ENCODE measurements at regions of chr2 and their contacts with region 1.

Region 1: DNA sequence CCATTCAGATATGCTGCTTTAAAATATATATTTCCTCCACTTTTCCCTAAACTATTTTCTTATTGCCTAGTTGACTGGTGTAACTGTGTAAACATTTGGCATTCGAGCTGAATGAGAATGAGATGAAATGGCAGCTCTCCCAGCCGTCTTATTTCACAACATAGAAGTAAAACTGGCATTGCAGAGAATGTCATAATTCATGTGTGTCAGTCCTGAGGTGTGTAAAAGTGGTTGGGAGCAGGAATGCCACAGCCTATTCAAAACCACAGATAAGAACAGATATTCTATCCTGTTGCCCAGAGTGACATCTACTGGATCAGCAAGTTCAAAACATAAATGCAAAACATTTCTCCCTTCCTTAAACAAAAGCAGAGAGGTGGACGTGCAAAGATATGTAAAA is 565.5 kb upstream of the CHAC2 start:
- DNase-seq: peak; percentile 56
- H3K4me3 Mint-ChIP-seq: no peak overlapping the region
- H3K27ac Mint-ChIP-seq: peak overlapping the region; percentile 54
- H3K4me1 Mint-ChIP-seq: peaks cover 9% of the 10 kb centered on the region
- H3K27me3 Mint-ChIP-seq: no peaks in the 10 kb centered on the region
- CTCF ChIP-seq: no peak

Region 2: DNA sequence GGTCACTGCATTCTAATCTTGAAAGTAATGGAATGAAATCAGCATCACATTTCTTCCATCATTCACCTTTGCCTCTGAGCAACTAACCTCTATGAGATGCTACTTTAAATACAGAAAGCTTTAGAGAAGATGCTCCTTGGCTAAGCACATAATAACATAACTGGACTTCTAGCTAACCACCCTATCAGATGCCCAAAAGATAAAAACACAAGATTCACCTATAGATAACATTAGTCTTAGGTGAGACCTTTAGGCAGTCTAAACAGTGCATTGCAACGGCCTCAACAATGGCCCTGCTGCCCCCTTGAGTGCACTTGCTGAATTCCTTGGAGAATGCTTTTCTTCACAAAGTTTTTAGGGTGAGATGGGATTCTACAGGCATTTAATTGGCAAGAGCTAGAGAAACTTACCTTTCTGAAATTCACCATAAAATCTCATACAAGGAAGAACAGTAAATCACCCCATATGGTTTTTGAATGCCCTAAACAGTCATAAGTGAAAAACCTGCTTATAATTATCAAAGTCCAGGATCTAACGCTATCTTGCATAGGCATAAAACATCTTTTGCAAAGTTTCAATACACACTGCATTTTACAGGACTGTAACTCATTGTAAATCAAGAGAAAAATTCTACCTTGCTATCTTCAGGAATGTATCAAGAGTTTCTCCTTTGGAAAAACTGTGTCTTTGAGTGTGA is 225.7 kb before region 1 on chr2:
- CTCF ChIA-PET with region 1: no interaction called
- intact Hi-C with region 1: loop called (anchors 1 kb)
- DNase-seq: peak; percentile 55
- H3K4me3 Mint-ChIP-seq: no peak overlapping the region
- H3K27ac Mint-ChIP-seq: no peak overlapping the region
- H3K4me1 Mint-ChIP-seq: no peaks in the 10 kb centered on the region
- H3K27me3 Mint-ChIP-seq: no peaks in the 10 kb centered on the region
- CTCF ChIP-seq: peak; percentile 43

Region 3: GRCh38 chr2:53104263-53104662 is 97.8 kb before region 1 on chr2:
- CTCF ChIA-PET with region 1: no interaction called
- intact Hi-C with region 1: loop called (anchors 5 kb)
- DNase-seq: peak; percentile 56
- H3K4me3 Mint-ChIP-seq: no peak overlapping the region
- H3K27ac Mint-ChIP-seq: peak overlapping the region; percentile 50
- H3K4me1 Mint-ChIP-seq: peaks cover 29% of the 10 kb centered on the region
- H3K27me3 Mint-ChIP-seq: no peaks in the 10 kb centered on the region
- CTCF ChIP-seq: no peak

Region 4: DNA sequence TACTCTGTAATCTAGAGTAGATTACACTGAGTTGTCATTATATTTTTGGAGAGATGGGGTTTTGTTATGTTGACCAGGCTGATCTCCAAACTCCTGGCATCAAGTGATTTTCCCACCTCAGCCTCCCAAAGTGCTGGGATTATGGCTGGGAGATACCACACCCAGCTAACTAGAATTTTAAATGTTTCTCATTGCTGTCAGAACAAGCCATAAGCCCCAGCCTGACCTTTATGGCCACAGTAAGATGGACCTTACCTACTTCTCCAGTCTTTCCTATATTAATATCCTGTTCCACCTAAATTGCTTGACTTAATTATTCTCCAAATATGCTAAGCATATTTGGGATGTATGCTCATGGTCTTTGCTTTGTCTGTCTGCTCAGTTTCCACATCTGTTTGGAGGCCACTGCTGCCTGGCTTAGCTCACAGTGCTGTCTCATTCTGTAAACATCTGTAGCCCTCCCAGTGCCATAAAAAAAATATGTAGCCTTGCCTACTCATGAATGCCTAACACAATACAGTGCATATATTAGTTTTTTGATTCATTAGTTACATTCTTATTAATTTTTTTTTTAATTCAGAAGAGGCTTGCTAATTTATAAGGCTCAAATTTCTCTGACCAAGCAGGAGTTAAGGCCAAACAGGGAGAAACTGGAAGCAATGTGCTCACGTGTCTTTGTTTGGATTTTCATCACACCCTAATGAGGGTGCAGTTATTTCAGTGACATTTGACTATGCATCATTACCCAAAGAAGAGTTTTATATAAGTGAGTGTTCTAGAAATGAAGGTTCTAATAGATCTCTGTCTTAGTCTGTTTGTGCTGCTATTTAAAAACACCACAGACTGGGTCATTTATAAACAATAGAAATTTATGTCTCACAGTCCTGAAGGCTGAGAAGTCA is 814.0 kb after region 1 on chr2:
- CTCF ChIA-PET with region 1: no interaction called
- intact Hi-C with region 1: no loop called
- DNase-seq: no peak
- H3K4me3 Mint-ChIP-seq: no peak overlapping the region
- H3K27ac Mint-ChIP-seq: no peak overlapping the region
- H3K4me1 Mint-ChIP-seq: no peaks in the 10 kb centered on the region
- H3K27me3 Mint-ChIP-seq: no peaks in the 10 kb centered on the region
- CTCF ChIP-seq: no peak

Measured in Calu3 (cell line).